ENCODE measurements at regions of chr3 and their contacts with region 1.

Region 1: DNA sequence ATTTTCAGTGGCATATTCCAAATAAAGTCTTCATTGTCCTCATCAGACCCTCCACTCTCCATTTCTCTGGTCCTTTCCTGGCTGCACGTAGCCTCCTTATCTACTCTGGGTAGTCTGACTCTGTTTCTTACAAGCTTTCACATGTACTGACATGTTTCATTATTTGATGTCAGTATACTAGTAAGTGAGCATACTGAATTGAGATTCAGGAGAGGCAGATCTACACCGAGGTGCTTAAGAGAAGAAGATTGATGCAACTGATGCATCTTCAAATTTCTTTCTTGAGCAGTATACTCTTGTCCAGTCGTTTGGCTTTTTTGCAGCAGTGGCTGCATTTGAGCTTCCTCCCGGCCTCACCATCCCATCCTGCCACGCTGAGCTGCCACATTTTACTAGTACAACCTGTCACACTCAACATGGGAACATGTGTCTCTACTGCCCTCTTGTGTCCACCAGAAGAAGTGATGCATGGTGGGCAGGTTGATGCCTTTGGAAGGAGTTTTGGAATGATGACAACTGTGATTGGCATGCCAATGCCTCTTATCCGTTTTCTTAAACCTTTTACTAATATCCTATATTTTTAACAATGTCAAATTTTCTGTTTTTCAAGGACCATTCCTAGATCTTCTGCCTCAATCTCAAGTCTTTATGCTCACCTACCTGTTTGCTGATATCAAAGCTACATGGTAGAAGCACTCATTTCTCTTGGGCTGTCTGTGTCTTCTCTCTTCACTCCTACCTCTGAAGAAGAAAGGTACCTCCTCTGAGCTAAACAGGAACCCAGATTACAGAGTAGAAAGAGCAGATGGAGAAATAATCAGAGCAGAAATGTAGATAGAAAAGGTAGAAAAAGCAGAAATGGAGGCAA is 38.7 kb downstream of the GUCA1C start:
- DNase-seq: peak; percentile 61 to 67
- H3K4me3 ChIP-seq: no peak overlapping the region
- H3K27ac ChIP-seq: no peak overlapping the region
- H3K4me1 ChIP-seq: no peaks in the 10 kb centered on the region
- H3K27me3 ChIP-seq: no peaks in the 10 kb centered on the region
- CTCF ChIP-seq: peak; percentile 57 to 91 (median 82)
- POLR2A ChIP-seq: no peak

Region 2: DNA sequence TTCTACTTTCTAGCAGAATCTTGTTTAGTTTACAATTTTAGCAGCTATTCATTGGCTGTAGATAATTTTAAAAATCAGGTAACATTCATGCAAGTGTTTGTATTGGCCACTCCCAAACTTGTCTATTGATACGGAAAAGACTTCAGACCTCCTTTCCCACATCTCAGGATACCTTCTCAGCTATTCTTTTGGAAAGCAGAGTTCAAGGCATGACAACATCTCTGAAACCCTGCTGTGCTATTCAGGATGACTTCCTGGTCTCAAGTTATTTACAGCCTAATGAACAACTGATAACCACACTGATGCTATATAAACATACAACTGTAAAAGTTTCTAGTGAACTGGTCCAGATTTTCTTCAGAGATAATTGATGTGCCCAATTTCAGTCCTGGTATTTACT is 269.6 kb before region 1 on chr3:
- intact Hi-C with region 1: no loop called
- DNase-seq: no peak
- H3K4me3 ChIP-seq: no peak overlapping the region
- H3K27ac ChIP-seq: no peak overlapping the region
- H3K4me1 ChIP-seq: no peaks in the 10 kb centered on the region
- H3K27me3 ChIP-seq: no peaks in the 10 kb centered on the region
- CTCF ChIP-seq: no peak
- POLR2A ChIP-seq: no peak

Region 3: DNA sequence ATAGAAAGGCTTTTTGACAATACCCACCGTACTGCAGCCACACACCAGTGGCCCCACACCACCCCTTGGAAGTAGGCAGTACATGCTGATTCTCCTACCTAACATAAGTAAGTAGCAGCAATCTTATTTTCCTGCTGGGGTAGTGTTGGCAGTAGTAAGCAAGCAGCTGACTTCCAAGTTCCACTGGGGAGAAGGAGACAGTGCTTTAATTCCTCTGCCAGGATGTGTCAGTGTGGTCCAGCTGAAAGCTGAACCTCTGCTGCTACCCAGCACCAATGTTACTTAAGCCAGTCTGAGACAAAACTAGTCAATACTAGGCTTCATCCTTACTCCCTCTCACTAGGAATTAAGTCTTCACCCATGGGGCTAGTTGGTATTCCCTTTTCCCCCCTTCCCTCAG is 250.7 kb before region 1 on chr3:
- intact Hi-C with region 1: loop called (anchors 2 kb)
- DNase-seq: no peak
- H3K4me3 ChIP-seq: no peak overlapping the region
- H3K27ac ChIP-seq: no peak overlapping the region
- H3K4me1 ChIP-seq: no peaks in the 10 kb centered on the region
- H3K27me3 ChIP-seq: no peaks in the 10 kb centered on the region
- CTCF ChIP-seq: no peak
- POLR2A ChIP-seq: no peak

Region 4: DNA sequence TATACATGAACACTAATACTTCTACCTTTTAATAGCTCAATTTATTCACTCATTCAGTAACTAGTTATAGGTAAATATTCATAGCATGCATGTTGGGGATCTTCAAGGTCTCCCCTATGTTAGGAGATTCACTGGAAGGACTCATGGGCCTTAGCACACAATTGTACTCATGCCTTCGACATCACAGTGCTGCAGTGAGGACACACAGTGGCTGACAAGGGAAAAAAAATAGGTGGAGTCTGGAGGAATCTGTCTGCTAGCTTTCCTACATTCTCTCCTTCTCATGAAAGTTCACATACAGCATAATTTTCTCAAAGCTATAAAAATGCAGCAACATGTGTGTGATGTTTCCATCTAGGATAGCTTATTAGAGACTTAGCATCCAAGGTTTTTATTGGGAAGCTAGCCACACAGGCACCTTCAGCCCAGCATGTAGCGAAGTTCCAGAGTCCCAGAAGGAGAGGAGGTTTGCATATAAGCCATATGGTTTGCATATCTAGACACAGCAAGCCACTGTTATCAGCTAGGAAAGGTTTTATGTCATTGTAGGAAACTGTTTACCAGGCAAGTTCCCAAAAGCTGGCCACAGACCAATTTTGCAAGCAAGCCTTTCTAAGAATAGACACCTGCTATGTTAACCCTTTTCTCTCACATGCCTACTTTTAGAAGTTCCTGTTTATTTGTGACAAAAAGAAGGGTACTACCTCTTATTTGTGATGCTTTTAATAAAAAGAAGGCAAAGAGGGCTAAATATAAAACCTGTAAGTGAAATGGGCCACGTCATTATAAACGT is 156.5 kb after region 1 on chr3:
- intact Hi-C with region 1: no loop called
- DNase-seq: no peak
- H3K4me3 ChIP-seq: no peak overlapping the region
- H3K27ac ChIP-seq: no peak overlapping the region
- H3K4me1 ChIP-seq: no peaks in the 10 kb centered on the region
- H3K27me3 ChIP-seq: no peaks in the 10 kb centered on the region
- CTCF ChIP-seq: no peak
- POLR2A ChIP-seq: no peak

Measured in thyroid gland (tissue), 4 donors.